Kidney (tissue), 22 donors: ENCODE measurements at regions of chr10 and their contacts with region 1.

Region 1: GRCh38 chr10:114304017-114304570 is 65.0 kb downstream of the VWA2 start:
- DNase-seq: peak; percentile 85 to 96 (median 92)
- H3K4me3 ChIP-seq: peak overlapping the region; percentile 49 to 74 (median 57)
- H3K27ac ChIP-seq: peak overlapping the region; percentile 33 to 51
- H3K4me1 ChIP-seq: peaks cover 0 to 7% (median 7%) of the 10 kb centered on the region in 3 donors
- H3K27me3 ChIP-seq: no peaks in the 10 kb centered on the region
- CTCF ChIP-seq: peak; percentile 86

Region 2: GRCh38 chr10:114437456-114438292 is 133.6 kb after region 1 on chr10:
- intact Hi-C with region 1: loop called (anchors 10 kb)
- DNase-seq: peak in 2 of 5 donors; percentile 23 to 42
- H3K4me3 ChIP-seq: no peak overlapping the region
- H3K27ac ChIP-seq: no peak overlapping the region
- H3K4me1 ChIP-seq: no peaks in the 10 kb centered on the region
- H3K27me3 ChIP-seq: no peaks in the 10 kb centered on the region
- CTCF ChIP-seq: no peak